Esophagus muscularis mucosa (tissue), 4 donors: ENCODE measurements at regions of chr1 and their contacts with region 1.

Region 1: DNA sequence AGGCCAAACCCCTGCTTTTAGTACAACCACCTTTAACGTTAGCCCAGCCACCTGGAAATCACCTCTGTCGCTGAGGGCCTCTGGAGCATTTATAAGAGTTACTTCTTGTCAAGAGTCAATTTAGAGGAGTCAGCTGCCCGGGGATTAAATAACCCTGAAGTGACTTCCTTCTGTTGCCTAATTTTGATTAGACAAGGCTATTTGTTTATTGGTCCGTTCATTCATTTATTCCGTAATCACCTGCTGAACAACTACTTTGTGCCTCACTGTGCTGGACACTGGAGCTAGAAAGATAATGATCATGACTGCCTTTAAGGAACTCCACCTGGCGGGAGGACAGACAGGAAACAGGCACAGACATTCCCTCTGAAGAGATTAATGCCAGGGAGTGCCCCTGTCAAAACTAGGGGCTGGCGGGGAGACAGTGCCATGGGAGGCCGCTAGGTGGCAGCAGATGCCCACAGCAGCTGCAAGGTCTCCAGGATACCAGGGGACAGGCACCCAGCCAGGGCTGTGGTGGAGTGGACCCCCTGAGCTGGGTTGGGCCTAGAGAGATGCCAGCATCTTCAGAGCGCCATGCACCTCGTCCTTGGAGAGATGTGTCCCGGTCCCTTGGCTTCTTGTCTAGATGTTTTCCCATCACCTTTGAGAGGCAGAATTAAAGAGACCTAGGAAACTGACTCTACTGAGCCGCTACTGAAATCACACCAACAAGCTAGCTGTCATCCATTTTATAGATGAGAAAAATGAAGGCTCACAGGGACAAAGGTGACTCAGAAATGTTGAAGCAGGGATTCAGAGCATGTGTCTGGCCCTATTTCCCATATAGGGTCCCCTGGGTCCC is 3.7 kb downstream of the REN start:
- DNase-seq: no peak
- H3K4me3 ChIP-seq: no peak overlapping the region
- H3K27ac ChIP-seq: no peak overlapping the region
- H3K4me1 ChIP-seq: peaks cover 0 to 3% (median 1%) of the 10 kb centered on the region in 4 donors
- H3K27me3 ChIP-seq: peaks cover 0 to 42% (median 0%) of the 10 kb centered on the region in 4 donors
- CTCF ChIP-seq: peak in 2 of 3 experiments; percentile 96
- EP300 ChIP-seq: no peak
- POLR2A ChIP-seq: no peak

Region 2: DNA sequence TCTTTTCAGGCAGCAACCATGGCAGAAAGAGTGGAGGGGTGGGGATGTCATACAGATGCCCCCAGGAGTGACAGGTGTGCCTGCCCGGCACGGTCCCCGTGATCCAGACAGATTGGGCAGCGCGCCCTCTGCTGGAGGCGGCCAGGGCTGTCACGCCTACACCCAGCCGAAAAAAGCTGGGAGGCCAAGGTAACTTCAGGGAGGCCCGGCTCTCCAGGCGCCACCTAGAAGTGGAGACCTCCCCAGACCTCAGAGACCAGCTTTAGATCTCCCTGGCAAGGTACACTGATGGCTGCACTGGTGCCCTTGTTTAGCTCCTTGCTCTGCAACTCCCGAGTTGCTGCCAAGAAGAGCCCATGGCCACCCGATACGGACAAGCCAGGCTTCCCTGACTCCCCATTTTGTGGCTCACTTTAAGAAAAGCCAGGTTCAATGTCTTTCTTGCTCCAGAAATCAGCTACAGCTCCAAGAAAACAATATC is 44.7 kb after region 1 on chr1:
- intact Hi-C with region 1: loop called (anchors 5 kb)
- DNase-seq: no peak
- H3K4me3 ChIP-seq: no peak overlapping the region
- H3K27ac ChIP-seq: no peak overlapping the region
- H3K4me1 ChIP-seq: peaks cover 0 to 8% (median 3%) of the 10 kb centered on the region in 4 donors
- H3K27me3 ChIP-seq: peaks cover 0 to 51% (median 6%) of the 10 kb centered on the region in 4 donors
- CTCF ChIP-seq: peak; percentile 65 to 91 (median 75)
- EP300 ChIP-seq: no peak
- POLR2A ChIP-seq: no peak